ENCODE measurements at regions of chr3 and their contacts with region 1.

Region 1: DNA sequence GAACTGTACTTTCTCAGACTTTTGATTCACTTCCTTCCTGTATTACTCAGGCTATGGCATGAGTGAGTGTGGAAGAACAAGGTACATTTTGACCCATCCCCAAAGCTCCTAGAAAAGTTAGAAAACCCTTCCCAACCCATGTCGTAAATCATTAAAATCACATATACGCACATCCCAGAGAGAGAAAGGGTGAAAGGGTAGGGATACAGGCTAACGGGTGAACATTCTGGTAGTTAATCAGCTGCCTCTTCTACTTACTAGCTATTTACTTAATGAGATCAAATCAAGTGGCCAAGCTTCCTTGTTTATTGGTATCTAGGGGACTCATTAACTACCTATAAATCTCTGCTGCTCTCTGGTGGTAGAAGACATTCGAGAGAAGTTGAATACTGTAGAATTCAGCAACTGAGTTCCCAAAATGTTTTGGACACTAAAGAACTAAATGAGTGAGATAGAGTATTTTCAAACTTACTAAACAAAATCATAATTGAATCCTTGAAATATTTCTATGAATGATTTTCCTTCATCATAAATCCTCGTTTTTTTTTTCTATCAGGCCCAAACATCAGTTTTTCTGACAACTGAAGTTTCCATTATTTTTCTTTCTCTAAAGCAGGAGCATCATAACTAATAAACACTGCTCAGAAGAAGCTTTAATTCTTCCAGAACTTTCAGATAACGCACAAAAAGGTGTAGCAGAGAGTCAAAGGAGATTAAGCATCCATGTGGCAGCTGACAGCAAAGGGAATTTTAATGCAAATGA is 124.2 kb downstream of the IMPG2 start:
- DNase-seq: peak; percentile 82
- H3K4me3 ChIP-seq: no peak overlapping the region
- H3K27ac ChIP-seq: peak overlapping the region; percentile 35
- H3K4me1 ChIP-seq: peaks cover 31% of the 10 kb centered on the region
- H3K27me3 ChIP-seq: no peaks in the 10 kb centered on the region
- CTCF ChIP-seq: peak; percentile 68

Region 2: GRCh38 chr3:100316641-100317069 is 879.5 kb before region 1 on chr3:
- CTCF ChIA-PET with region 1: no interaction called
- POLR2A ChIA-PET with region 1: no interaction called
- intact Hi-C with region 1: loop called (anchors 5 kb)
- DNase-seq: peak; percentile 77
- H3K4me3 ChIP-seq: no peak overlapping the region
- H3K27ac ChIP-seq: no peak overlapping the region
- H3K4me1 ChIP-seq: peaks cover 3% of the 10 kb centered on the region
- H3K27me3 ChIP-seq: no peaks in the 10 kb centered on the region
- CTCF ChIP-seq: peak; percentile 70

Region 3: GRCh38 chr3:100603469-100603868 is 592.7 kb before region 1 on chr3:
- CTCF ChIA-PET with region 1: interaction called, 5 read pairs
- POLR2A ChIA-PET with region 1: no interaction called
- intact Hi-C with region 1: loop called (anchors 10 kb)
- DNase-seq: peak; percentile 72
- H3K4me3 ChIP-seq: peak overlapping the region; percentile 12
- H3K27ac ChIP-seq: no peak overlapping the region
- H3K4me1 ChIP-seq: peaks cover 34% of the 10 kb centered on the region
- H3K27me3 ChIP-seq: no peaks in the 10 kb centered on the region
- CTCF ChIP-seq: peak; percentile 59

Region 4: DNA sequence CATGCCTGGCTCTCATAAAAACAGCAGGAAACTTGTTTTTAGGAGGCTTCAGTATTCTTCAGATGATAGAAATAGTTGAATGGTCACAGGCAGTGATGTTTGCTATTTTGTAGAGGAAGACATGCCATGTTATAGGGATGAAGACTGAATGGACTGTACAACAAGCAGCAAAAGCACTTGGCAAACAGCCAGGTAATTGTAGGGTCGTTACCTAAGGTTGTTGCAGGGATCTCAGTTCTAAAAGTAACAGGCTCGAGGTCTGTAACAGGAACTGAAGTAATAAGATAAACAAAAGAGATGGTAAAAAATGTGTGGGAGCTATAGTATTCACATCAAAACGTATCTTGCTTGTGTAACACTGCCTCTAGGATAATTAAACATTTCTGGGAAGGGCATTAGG is 370.6 kb before region 1 on chr3:
- CTCF ChIA-PET with region 1: interaction called, 4 read pairs
- POLR2A ChIA-PET with region 1: no interaction called
- intact Hi-C with region 1: loop called (anchors 5 kb)
- DNase-seq: no peak
- H3K4me3 ChIP-seq: no peak overlapping the region
- H3K27ac ChIP-seq: no peak overlapping the region
- H3K4me1 ChIP-seq: no peaks in the 10 kb centered on the region
- H3K27me3 ChIP-seq: peaks cover 4% of the 10 kb centered on the region
- CTCF ChIP-seq: no peak

Region 5: DNA sequence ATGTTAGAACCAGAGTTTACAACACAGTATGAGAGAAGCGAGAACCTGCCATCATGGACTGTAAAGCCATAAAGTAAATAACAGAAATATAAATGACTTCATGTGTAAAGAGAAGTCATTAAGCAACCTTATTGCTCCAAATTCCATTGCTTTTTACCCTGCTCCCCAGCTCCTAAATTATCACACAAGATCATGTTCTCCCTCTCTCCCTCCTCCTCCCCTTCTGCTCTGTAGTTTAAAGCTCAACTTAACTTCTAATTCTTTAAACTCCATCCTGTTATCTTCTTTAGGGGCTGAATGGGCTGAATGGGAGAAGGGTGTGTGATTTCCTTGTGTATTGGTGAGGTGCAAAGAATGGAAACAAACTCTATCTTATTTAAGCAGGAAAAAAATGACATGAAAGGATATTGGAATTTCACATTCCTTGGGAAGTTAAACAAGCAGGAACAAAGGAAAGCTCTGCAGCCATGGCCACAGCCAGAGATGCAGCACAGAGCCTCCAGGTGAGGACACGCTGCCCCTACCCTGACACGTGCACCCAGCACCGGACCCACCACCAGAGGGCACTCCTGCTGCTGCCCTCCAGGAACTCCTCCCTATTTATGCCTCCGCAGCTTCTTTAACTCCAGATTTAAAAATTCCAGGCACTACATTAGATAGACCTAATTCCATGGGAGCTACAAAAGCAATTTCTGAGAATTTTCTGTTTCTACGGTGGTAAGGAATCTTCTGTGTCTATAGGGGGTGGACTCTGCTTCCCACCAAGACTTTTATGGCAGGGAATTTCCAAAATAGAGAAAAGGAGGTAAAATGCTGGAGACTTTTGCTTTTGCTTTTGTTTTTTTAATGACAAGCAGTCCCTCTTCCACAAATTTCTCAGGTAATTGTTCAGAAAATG is 126.0 kb before region 1 on chr3:
- CTCF ChIA-PET with region 1: interaction called, 4 read pairs
- POLR2A ChIA-PET with region 1: no interaction called
- intact Hi-C with region 1: loop called (anchors 2 kb)
- DNase-seq: peak; percentile 45
- H3K4me3 ChIP-seq: no peak overlapping the region
- H3K27ac ChIP-seq: no peak overlapping the region
- H3K4me1 ChIP-seq: no peaks in the 10 kb centered on the region
- H3K27me3 ChIP-seq: no peaks in the 10 kb centered on the region
- CTCF ChIP-seq: peak; percentile 78

Region 6: DNA sequence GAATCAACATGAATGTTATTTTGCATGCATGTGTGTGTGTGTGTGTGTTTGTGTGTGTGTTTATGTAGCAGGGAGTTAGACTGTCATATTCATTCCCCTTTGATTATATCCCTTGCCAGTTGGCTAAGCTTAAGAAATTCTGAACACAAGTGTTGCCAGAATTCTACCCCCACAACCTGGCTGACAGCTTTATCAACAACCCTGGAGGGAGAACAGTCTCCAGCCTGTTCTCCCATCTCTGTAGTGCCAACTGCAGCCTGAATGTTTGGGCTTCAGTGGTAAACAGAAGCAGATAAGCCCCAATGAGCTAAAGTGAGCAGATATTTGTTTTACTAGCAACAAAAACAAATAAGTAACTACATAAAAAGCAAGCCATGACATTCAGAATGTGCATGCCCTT is 40.3 kb before region 1 on chr3:
- CTCF ChIA-PET with region 1: no interaction called
- POLR2A ChIA-PET with region 1: no interaction called
- intact Hi-C with region 1: no loop called
- DNase-seq: no peak
- H3K4me3 ChIP-seq: no peak overlapping the region
- H3K27ac ChIP-seq: no peak overlapping the region
- H3K4me1 ChIP-seq: no peaks in the 10 kb centered on the region
- H3K27me3 ChIP-seq: peaks cover 44% of the 10 kb centered on the region
- CTCF ChIP-seq: no peak

Measured in A673 (cell line).